Naive thymus-derived CD4-positive, alpha-beta T cell (primary cell): ENCODE measurements at regions of chr17 and their contacts with region 1.

Region 1: DNA sequence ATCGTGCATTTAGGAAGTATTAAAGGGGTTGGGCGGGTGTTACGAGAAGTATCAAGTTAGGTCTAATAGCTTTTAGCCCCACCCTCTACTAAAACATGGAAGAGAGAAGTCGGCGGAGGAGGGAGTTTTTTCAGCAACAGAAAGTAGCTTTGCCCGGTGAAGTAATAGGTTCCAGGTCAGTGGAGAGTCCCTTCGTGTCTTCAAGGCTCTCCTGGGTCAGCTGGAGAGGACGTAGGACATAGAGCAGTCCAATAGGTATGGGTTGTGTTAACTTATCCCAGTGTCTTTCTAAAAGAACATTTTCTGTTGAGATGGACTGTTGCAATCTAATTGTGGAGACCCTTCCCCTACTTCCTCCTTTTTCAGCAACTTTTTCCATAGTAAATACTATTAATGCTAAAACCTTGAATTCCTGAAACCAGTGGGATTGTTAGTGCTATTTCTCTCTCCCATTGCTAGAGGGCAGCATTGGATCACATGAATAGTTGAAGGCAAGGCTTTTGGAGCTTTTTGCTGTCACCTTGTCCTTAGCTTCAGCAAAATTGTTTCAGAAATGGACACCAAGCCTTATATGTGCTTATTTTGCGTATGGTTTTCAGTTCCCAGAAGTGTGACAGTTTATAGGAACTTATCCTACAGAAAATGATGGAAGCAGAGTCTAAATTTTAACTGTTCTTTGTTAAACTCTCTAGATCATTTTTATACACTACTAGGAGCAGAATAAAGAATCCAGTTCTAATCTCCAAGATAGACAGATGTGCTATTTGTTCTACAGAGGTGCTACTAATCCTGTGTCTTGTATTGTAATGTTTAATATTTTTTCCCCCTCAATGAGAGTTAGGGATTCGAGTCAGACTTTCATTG is 38.4 kb downstream of the UTP18 start:
- DNase-seq: peak in 5 of 9 donors; percentile 15 to 43 (median 25)
- ATAC-seq: peak; percentile 42
- H3K4me3 ChIP-seq: no peak overlapping the region
- H3K4me3 Mint-ChIP-seq: no peak overlapping the region
- H3K27ac ChIP-seq: no peak overlapping the region
- H3K27ac Mint-ChIP-seq: peak overlapping the region in 2 of 9 donors; percentile 23 to 25
- H3K4me1 ChIP-seq: no peaks in the 10 kb centered on the region
- H3K4me1 Mint-ChIP-seq: peaks cover 0 to 14% (median 5%) of the 10 kb centered on the region in 7 donors
- H3K27me3 ChIP-seq: no peaks in the 10 kb centered on the region
- H3K27me3 Mint-ChIP-seq: no peaks in the 10 kb centered on the region

Region 2: GRCh38 chr17:51346218-51346982 is 47.7 kb after region 1 on chr17:
- CTCF ChIA-PET with region 1: no interaction called
- POLR2A ChIA-PET with region 1: no interaction called
- intact Hi-C with region 1: no loop called
- DNase-seq: no peak
- ATAC-seq: no peak
- H3K4me3 ChIP-seq: no peak overlapping the region
- H3K4me3 Mint-ChIP-seq: no peak overlapping the region
- H3K27ac ChIP-seq: no peak overlapping the region
- H3K27ac Mint-ChIP-seq: no peak overlapping the region
- H3K4me1 ChIP-seq: no peaks in the 10 kb centered on the region
- H3K4me1 Mint-ChIP-seq: peaks cover 0 to 2% (median 0%) of the 10 kb centered on the region in 7 donors
- H3K27me3 ChIP-seq: no peaks in the 10 kb centered on the region
- H3K27me3 Mint-ChIP-seq: peaks cover 0 to 24% (median 0%) of the 10 kb centered on the region in 5 donors

Region 3: GRCh38 chr17:51533219-51533618 is 234.5 kb after region 1 on chr17:
- CTCF ChIA-PET with region 1: interaction called, 6 read pairs
- POLR2A ChIA-PET with region 1: no interaction called
- intact Hi-C with region 1: loop called (anchors 1 to 2 kb)
- DNase-seq: no peak
- ATAC-seq: no peak
- H3K4me3 ChIP-seq: no peak overlapping the region
- H3K4me3 Mint-ChIP-seq: no peak overlapping the region
- H3K27ac ChIP-seq: no peak overlapping the region
- H3K27ac Mint-ChIP-seq: no peak overlapping the region
- H3K4me1 ChIP-seq: no peaks in the 10 kb centered on the region
- H3K4me1 Mint-ChIP-seq: no peaks in the 10 kb centered on the region
- H3K27me3 ChIP-seq: no peaks in the 10 kb centered on the region
- H3K27me3 Mint-ChIP-seq: peaks cover 0 to 11% (median 0%) of the 10 kb centered on the region in 5 donors

Region 4: GRCh38 chr17:51540151-51540550 is 241.4 kb after region 1 on chr17:
- CTCF ChIA-PET with region 1: interaction called, 6 read pairs
- POLR2A ChIA-PET with region 1: no interaction called
- intact Hi-C with region 1: loop called (anchors 1 to 2 kb)
- DNase-seq: peak in 6 of 9 donors; percentile 5 to 41 (median 22)
- ATAC-seq: peak; percentile 41
- H3K4me3 ChIP-seq: no peak overlapping the region
- H3K4me3 Mint-ChIP-seq: peak overlapping the region in 6 of 10 donors; percentile 3 to 45 (median 12)
- H3K27ac ChIP-seq: no peak overlapping the region
- H3K27ac Mint-ChIP-seq: peak overlapping the region in 7 of 9 donors; percentile 5 to 66 (median 56)
- H3K4me1 ChIP-seq: peaks cover 0 to 4% of the 10 kb centered on the region in 2 donors
- H3K4me1 Mint-ChIP-seq: peaks cover 4 to 25% (median 19%) of the 10 kb centered on the region in 7 donors
- H3K27me3 ChIP-seq: no peaks in the 10 kb centered on the region
- H3K27me3 Mint-ChIP-seq: peaks cover 0 to 3% (median 0%) of the 10 kb centered on the region in 5 donors

Region 5: DNA sequence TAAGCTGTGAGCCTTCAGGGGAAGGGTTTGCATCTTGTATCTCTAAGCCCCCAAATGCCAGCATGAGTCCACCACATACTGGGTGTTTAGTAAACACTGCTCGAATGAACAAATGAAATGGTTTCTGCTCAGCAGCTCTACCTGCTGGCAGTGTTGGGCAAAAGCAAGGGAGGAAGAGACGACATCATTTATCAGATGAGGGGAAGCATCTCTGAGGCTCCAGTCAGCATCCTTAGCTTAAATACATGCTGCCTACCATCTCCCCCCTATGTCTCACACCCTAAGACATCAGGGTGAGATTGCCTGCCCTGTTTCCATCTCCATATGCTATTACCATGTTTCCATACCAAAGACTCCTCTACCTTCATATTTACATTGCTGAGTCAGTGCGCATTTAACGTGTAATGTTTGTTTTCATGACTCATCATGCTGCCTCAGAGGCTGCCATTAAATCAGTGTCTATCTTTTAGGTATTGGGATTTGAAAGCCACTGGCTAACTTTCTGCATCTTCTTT is 341.4 kb after region 1 on chr17:
- CTCF ChIA-PET with region 1: interaction called, 3 read pairs
- POLR2A ChIA-PET with region 1: no interaction called
- intact Hi-C with region 1: loop called in 1 of 2 experiments (anchors 2 kb)
- DNase-seq: peak in 5 of 9 donors; percentile 5 to 19 (median 9)
- ATAC-seq: no peak
- H3K4me3 ChIP-seq: no peak overlapping the region
- H3K4me3 Mint-ChIP-seq: no peak overlapping the region
- H3K27ac ChIP-seq: no peak overlapping the region
- H3K27ac Mint-ChIP-seq: no peak overlapping the region
- H3K4me1 ChIP-seq: no peaks in the 10 kb centered on the region
- H3K4me1 Mint-ChIP-seq: no peaks in the 10 kb centered on the region
- H3K27me3 ChIP-seq: no peaks in the 10 kb centered on the region
- H3K27me3 Mint-ChIP-seq: peaks cover 4 to 18% (median 15%) of the 10 kb centered on the region in 5 donors

Region 6: GRCh38 chr17:51764387-51764972 is 465.7 kb after region 1 on chr17:
- CTCF ChIA-PET with region 1: no interaction called
- POLR2A ChIA-PET with region 1: no interaction called
- intact Hi-C with region 1: loop called in 1 of 2 experiments (anchors 2 kb)
- DNase-seq: peak in 8 of 9 donors; percentile 8 to 49 (median 36)
- ATAC-seq: peak; percentile 83
- H3K4me3 ChIP-seq: no peak overlapping the region
- H3K4me3 Mint-ChIP-seq: no peak overlapping the region
- H3K27ac ChIP-seq: no peak overlapping the region
- H3K27ac Mint-ChIP-seq: no peak overlapping the region
- H3K4me1 ChIP-seq: no peaks in the 10 kb centered on the region
- H3K4me1 Mint-ChIP-seq: no peaks in the 10 kb centered on the region
- H3K27me3 ChIP-seq: no peaks in the 10 kb centered on the region
- H3K27me3 Mint-ChIP-seq: peaks cover 10 to 59% (median 35%) of the 10 kb centered on the region in 5 donors